A673 (cell line): ENCODE measurements at regions of chr4 and their contacts with region 1.

Region 1: GRCh38 chr4:176340871-176341685 is 21.3 kb downstream of the SPCS3 start:
- DNase-seq: peak; percentile 61
- H3K4me3 ChIP-seq: no peak overlapping the region
- H3K27ac ChIP-seq: no peak overlapping the region
- H3K4me1 ChIP-seq: no peaks in the 10 kb centered on the region
- H3K27me3 ChIP-seq: no peaks in the 10 kb centered on the region
- CTCF ChIP-seq: peak; percentile 74

Region 2: GRCh38 chr4:175560604-175561003 is 780.5 kb before region 1 on chr4:
- CTCF ChIA-PET with region 1: no interaction called
- POLR2A ChIA-PET with region 1: no interaction called
- intact Hi-C with region 1: loop called (anchors 1 kb)
- DNase-seq: peak; percentile 48
- H3K4me3 ChIP-seq: no peak overlapping the region
- H3K27ac ChIP-seq: no peak overlapping the region
- H3K4me1 ChIP-seq: no peaks in the 10 kb centered on the region
- H3K27me3 ChIP-seq: peaks cover 6% of the 10 kb centered on the region
- CTCF ChIP-seq: peak; percentile 56

Region 3: GRCh38 chr4:175639346-175639745 is 701.7 kb before region 1 on chr4:
- CTCF ChIA-PET with region 1: no interaction called
- POLR2A ChIA-PET with region 1: no interaction called
- intact Hi-C with region 1: no loop called
- DNase-seq: no peak
- H3K4me3 ChIP-seq: no peak overlapping the region
- H3K27ac ChIP-seq: no peak overlapping the region
- H3K4me1 ChIP-seq: no peaks in the 10 kb centered on the region
- H3K27me3 ChIP-seq: no peaks in the 10 kb centered on the region
- CTCF ChIP-seq: no peak

Region 4: GRCh38 chr4:175947117-175947722 is 393.9 kb before region 1 on chr4:
- CTCF ChIA-PET with region 1: no interaction called
- POLR2A ChIA-PET with region 1: no interaction called
- intact Hi-C with region 1: loop called (anchors 2 kb)
- DNase-seq: peak; percentile 19
- H3K4me3 ChIP-seq: no peak overlapping the region
- H3K27ac ChIP-seq: no peak overlapping the region
- H3K4me1 ChIP-seq: no peaks in the 10 kb centered on the region
- H3K27me3 ChIP-seq: no peaks in the 10 kb centered on the region
- CTCF ChIP-seq: peak; percentile 65

Region 5: GRCh38 chr4:175953960-175954521 is 387.0 kb before region 1 on chr4:
- CTCF ChIA-PET with region 1: interaction called, 3 read pairs
- POLR2A ChIA-PET with region 1: no interaction called
- intact Hi-C with region 1: loop called (anchors 2 kb)
- DNase-seq: peak; percentile 17
- H3K4me3 ChIP-seq: no peak overlapping the region
- H3K27ac ChIP-seq: no peak overlapping the region
- H3K4me1 ChIP-seq: no peaks in the 10 kb centered on the region
- H3K27me3 ChIP-seq: no peaks in the 10 kb centered on the region
- CTCF ChIP-seq: peak; percentile 51

Region 6: DNA sequence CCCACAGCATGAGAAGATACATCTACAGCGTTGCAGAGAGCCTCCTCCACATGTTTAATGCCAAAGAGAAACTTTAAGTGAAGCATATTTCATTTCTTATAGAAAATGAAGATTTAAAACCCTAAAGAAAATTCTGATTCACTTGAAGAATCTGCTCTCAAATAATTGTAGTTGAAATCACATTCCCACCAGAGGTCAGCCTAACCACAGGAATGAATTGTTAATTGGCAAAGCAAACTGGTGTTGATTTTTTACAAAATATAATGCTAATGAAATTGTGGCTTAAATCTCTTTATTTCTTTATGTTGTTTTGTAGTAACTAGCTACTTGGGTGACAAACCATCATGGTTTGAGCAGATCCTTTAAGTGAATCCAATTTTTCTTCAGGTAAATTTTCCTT is 306.6 kb before region 1 on chr4:
- CTCF ChIA-PET with region 1: no interaction called
- POLR2A ChIA-PET with region 1: no interaction called
- intact Hi-C with region 1: loop called (anchors 2 kb)
- DNase-seq: peak; percentile 34
- H3K4me3 ChIP-seq: no peak overlapping the region
- H3K27ac ChIP-seq: no peak overlapping the region
- H3K4me1 ChIP-seq: no peaks in the 10 kb centered on the region
- H3K27me3 ChIP-seq: no peaks in the 10 kb centered on the region
- CTCF ChIP-seq: peak; percentile 45

Region 7: DNA sequence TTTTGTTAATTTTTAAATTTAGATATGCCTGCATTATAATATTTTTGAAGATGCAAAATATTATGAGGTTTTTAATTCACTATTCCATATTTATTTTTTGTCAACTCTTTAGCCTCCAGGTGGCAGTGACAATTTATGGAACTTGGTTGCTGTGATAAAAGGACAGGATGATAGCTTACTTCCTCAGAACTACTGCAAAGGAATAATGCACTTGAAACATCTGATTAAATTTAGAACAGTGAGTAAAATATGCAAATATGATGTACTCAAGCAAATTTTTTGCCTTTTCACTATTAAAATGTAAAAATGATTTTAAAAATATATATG is 190.8 kb before region 1 on chr4:
- CTCF ChIA-PET with region 1: interaction called, 8 read pairs
- POLR2A ChIA-PET with region 1: no interaction called
- intact Hi-C with region 1: loop called (anchors 5 kb)
- DNase-seq: peak; percentile 6
- H3K4me3 ChIP-seq: no peak overlapping the region
- H3K27ac ChIP-seq: no peak overlapping the region
- H3K4me1 ChIP-seq: no peaks in the 10 kb centered on the region
- H3K27me3 ChIP-seq: no peaks in the 10 kb centered on the region
- CTCF ChIP-seq: peak; percentile 37; the same call in 1 of the 2 replicates

Region 8: GRCh38 chr4:176561368-176561767 is 220.3 kb after region 1 on chr4:
- CTCF ChIA-PET with region 1: no interaction called
- POLR2A ChIA-PET with region 1: no interaction called
- intact Hi-C with region 1: no loop called
- DNase-seq: no peak
- H3K4me3 ChIP-seq: no peak overlapping the region
- H3K27ac ChIP-seq: no peak overlapping the region
- H3K4me1 ChIP-seq: peaks cover 5% of the 10 kb centered on the region
- H3K27me3 ChIP-seq: peaks cover 41% of the 10 kb centered on the region
- CTCF ChIP-seq: no peak